ENCODE measurements at regions of chr5 and their contacts with region 1.

Region 1: DNA sequence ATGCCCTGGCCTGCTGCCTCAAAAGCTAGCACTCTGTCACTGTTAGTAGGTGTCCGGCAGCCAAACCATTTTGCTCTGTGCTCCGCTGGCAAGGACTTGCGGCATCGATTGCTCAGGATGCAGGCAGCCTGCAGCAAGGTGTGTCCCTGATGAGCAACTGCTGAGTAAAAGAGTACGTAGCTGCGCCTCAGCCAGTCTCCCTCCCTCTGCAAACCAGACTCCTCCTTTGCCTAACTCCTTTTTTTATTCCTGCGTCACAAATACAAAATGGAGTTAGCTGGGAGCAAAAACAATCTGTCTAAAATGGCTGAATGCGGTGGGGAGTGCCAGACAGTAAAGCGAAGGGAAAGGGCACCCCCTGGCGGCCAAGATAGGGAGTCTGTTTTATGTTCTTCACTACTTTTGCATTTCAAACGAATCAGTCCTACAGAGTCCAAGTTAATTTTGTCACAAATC is 61.1 kb downstream of the DIAPH1 start:
- DNase-seq: peak; percentile 69
- H3K4me3 ChIP-seq: peak overlapping the region; percentile 34 to 39; a peak in 3 of 4 replicates
- H3K27ac ChIP-seq: peak overlapping the region; percentile 91 to 100
- H3K4me1 ChIP-seq: peaks cover 21 to 23% of the 10 kb centered on the region in 2 experiments; a peak in 3 of 4 replicates
- H3K27me3 ChIP-seq: no peaks in the 10 kb centered on the region
- CTCF ChIP-seq: peak; percentile 93
- EP300 ChIP-seq: peak; percentile 28 to 48; a peak in 3 of 4 replicates
- RAD21 ChIP-seq: peak; percentile 96

Region 2: DNA sequence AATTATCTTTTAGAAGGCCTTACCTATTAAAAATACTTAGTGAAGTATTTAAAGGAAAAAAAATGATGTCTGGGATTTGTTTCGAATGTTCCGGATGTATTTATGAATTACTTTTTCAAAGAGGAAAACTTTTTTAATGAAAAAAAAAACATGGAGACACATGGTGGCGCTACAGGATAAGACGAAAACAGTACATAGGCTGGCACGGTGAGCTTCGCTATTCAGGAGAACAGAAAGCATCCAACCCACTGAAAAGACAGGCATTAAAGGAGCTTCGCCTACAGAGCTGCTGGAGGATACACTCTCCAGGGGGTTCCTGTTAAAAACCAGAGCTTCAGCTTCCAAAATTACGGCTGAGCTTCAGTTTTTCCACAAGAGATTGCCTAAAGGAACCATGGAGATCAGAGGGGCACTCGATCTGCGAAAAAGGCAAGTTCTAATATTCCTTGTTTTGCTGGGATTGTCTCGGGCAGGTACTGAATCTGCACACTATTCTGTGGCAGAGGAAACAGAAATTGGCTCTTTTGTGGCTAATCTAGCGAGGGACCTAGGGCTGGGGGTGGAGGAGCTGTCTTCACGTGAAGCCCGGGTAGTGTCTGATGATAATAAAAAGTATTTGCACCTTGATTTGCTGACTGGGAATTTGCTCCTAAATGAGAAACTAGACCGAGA is 334.5 kb before region 1 on chr5 and contains the start of gene PCDHB14:
- CTCF ChIA-PET with region 1: interaction called, 38 read pairs
- POLR2A ChIA-PET with region 1: interaction called, 9 read pairs
- DNase-seq: peak; percentile 78
- H3K4me3 ChIP-seq: peak within 1 kb of the TSS; percentile 59 to 80
- H3K27ac ChIP-seq: peak within 1 kb of the TSS; percentile 29 to 74; a peak in 2 of 4 replicates
- H3K4me1 ChIP-seq: peaks cover 0 to 2% of the 10 kb centered on the region in 2 experiments; a peak in 2 of 4 replicates
- H3K27me3 ChIP-seq: no peaks in the 10 kb centered on the region
- CTCF ChIP-seq: peak; percentile 65
- EP300 ChIP-seq: no peak
- RAD21 ChIP-seq: peak; percentile 81
- polyA plus RNA-seq, gene PCDHB14: 9.7 and 10.6 TPM in 2 replicates

Region 3: DNA sequence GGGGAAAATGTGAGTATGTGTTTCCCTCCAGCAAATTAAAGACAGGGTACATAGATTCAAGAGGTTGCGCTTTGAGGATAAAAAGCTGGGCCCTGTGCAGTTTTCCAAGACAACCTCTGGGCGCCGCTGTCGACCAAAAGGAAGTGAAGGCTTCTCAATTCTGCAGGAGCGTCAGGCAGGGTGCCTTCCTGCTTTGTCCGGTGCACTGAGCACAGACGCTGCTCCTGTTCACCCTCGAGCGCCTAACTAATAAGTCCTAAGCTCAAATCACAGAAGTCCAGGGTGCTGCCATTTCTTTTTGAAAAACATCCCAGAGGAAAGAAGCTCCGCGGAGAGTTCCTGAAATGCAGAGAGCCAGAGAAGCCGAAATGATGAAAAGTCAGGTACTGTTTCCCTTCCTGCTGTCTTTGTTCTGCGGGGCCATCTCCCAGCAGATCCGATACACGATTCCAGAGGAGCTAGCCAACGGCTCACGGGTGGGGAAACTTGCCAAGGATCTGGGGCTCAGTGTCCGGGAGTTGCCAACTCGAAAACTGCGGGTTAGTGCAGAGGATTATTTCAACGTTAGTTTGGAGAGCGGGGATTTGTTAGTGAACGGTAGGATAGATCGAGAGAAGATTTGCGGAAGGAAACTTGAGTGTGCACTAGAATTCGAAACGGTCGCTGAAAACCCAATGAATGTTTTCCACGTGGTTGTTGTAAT is 207.6 kb before region 1 on chr5 and contains the start of gene PCDHGB1:
- CTCF ChIA-PET with region 1: interaction called, 12 read pairs
- POLR2A ChIA-PET with region 1: interaction called, 3 read pairs
- DNase-seq: peak; percentile 63
- H3K4me3 ChIP-seq: peak within 1 kb of the TSS in 1 of 2 experiments; percentile 6; a peak in 1 of 4 replicates
- H3K27ac ChIP-seq: no peak within 1 kb of the TSS
- H3K4me1 ChIP-seq: no peaks in the 10 kb centered on the region
- H3K27me3 ChIP-seq: no peaks in the 10 kb centered on the region
- CTCF ChIP-seq: peak; percentile 39
- EP300 ChIP-seq: no peak
- RAD21 ChIP-seq: peak; percentile 44
- polyA plus RNA-seq, gene PCDHGB1: 0.63 and 0.77 TPM in 2 replicates

Region 4: GRCh38 chr5:141412854-141413539 is 144.7 kb before region 1 on chr5 and contains the start of gene PCDHGA10:
- CTCF ChIA-PET with region 1: interaction called, 44 read pairs
- POLR2A ChIA-PET with region 1: interaction called, 5 read pairs
- DNase-seq: no peak
- H3K4me3 ChIP-seq: peak within 1 kb of the TSS; percentile 22 to 28; a peak in 3 of 4 replicates
- H3K27ac ChIP-seq: no peak within 1 kb of the TSS
- H3K4me1 ChIP-seq: no peaks in the 10 kb centered on the region
- H3K27me3 ChIP-seq: no peaks in the 10 kb centered on the region
- CTCF ChIP-seq: peak; percentile 54
- EP300 ChIP-seq: no peak
- RAD21 ChIP-seq: peak; percentile 47
- polyA plus RNA-seq, gene PCDHGA10: 1.6 and 2.0 TPM in 2 replicates

Region 5: GRCh38 chr5:141501761-141502160 is 55.9 kb before region 1 on chr5:
- CTCF ChIA-PET with region 1: interaction called, 31 read pairs
- POLR2A ChIA-PET with region 1: no interaction called
- DNase-seq: no peak
- H3K4me3 ChIP-seq: no peak overlapping the region
- H3K27ac ChIP-seq: 0 out of 4 replicates have a peak overlapping the region, but pooled peaks of 1 of the 2 experiments have one; percentile 10
- H3K4me1 ChIP-seq: peaks cover 5 to 7% of the 10 kb centered on the region in 2 experiments; a peak in 2 of 4 replicates
- H3K27me3 ChIP-seq: no peaks in the 10 kb centered on the region
- CTCF ChIP-seq: no peak
- EP300 ChIP-seq: no peak
- RAD21 ChIP-seq: no peak

Region 6: DNA sequence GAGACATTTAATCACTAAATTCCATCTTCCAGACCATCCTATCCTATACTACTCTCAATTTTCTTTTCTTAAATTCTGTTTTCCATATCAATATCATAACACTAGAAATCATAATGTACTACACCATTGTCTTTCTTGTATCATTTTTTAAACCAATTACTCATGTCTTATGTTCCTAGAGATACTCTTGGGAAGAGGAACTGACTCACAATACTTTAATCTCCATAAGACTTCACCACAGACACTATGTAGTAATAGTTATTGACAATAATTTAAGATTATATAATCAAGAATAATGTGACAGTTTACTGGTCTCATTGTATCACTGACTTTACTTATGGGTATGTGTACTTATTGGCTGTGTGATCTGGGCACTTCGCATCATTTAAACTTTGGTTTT is 25.0 kb before region 1 on chr5:
- CTCF ChIA-PET with region 1: interaction called, 191 read pairs
- POLR2A ChIA-PET with region 1: interaction called, 4 read pairs
- DNase-seq: no peak
- H3K4me3 ChIP-seq: no peak overlapping the region
- H3K27ac ChIP-seq: peak overlapping the region in 1 of 2 experiments; percentile 7; a peak in 1 of 4 replicates
- H3K4me1 ChIP-seq: peaks cover 18 to 36% of the 10 kb centered on the region in 2 experiments
- H3K27me3 ChIP-seq: no peaks in the 10 kb centered on the region
- CTCF ChIP-seq: no peak
- EP300 ChIP-seq: no peak
- RAD21 ChIP-seq: no peak